Stomach (tissue), 19 donors: ENCODE measurements at regions of chr2 and their contacts with region 1.

Region 1: GRCh38 chr2:72293620-72294019 is 146.0 kb upstream of the CYP26B1 start:
- DNase-seq: no peak
- H3K4me3 ChIP-seq: no peak overlapping the region
- H3K27ac ChIP-seq: no peak overlapping the region
- H3K4me1 ChIP-seq: no peaks in the 10 kb centered on the region
- H3K27me3 ChIP-seq: no peaks in the 10 kb centered on the region
- CTCF ChIP-seq: no peak
- EP300 ChIP-seq: no peak
- POLR2A ChIP-seq: no peak

Region 2: GRCh38 chr2:72340665-72341064 is 47.0 kb after region 1 on chr2:
- intact Hi-C with region 1: loop called (anchors 5 kb)
- DNase-seq: no peak
- H3K4me3 ChIP-seq: no peak overlapping the region
- H3K27ac ChIP-seq: no peak overlapping the region
- H3K4me1 ChIP-seq: no peaks in the 10 kb centered on the region
- H3K27me3 ChIP-seq: no peaks in the 10 kb centered on the region
- CTCF ChIP-seq: no peak
- EP300 ChIP-seq: no peak
- POLR2A ChIP-seq: no peak

Region 3: GRCh38 chr2:72572501-72572900 is 278.9 kb after region 1 on chr2:
- intact Hi-C with region 1: no loop called
- DNase-seq: no peak
- H3K4me3 ChIP-seq: no peak overlapping the region
- H3K27ac ChIP-seq: no peak overlapping the region
- H3K4me1 ChIP-seq: no peaks in the 10 kb centered on the region
- H3K27me3 ChIP-seq: no peaks in the 10 kb centered on the region
- CTCF ChIP-seq: no peak
- EP300 ChIP-seq: no peak
- POLR2A ChIP-seq: no peak